ENCODE measurements at regions of chr5 and their contacts with region 1.

Region 1: GRCh38 chr5:40834849-40835787 is at the start of gene RPL37:
- DNase-seq: peak; percentile 96
- H3K4me3 Mint-ChIP-seq: peak within 1 kb of the TSS; percentile 100
- H3K27ac Mint-ChIP-seq: peak within 1 kb of the TSS; percentile 100
- H3K4me1 Mint-ChIP-seq: peaks cover 48% of the 10 kb centered on the region
- H3K27me3 Mint-ChIP-seq: no peaks in the 10 kb centered on the region
- total RNA-seq, gene RPL37: 2,148 to 2,239 TPM

Region 2: GRCh38 chr5:39202597-39203274 is 1632.4 kb before region 1 on chr5:
- CTCF ChIA-PET with region 1: no interaction called
- intact Hi-C with region 1: loop called (anchors 5 kb)
- DNase-seq: peak; percentile 55
- H3K4me3 Mint-ChIP-seq: peak overlapping the region; percentile 83
- H3K27ac Mint-ChIP-seq: peak overlapping the region; percentile 99
- H3K4me1 Mint-ChIP-seq: peaks cover 37% of the 10 kb centered on the region
- H3K27me3 Mint-ChIP-seq: no peaks in the 10 kb centered on the region

Region 3: GRCh38 chr5:40410231-40410861 is 424.8 kb before region 1 on chr5:
- CTCF ChIA-PET with region 1: no interaction called
- intact Hi-C with region 1: loop called (anchors 1 kb)
- DNase-seq: peak; percentile 88
- H3K4me3 Mint-ChIP-seq: peak overlapping the region; percentile 58
- H3K27ac Mint-ChIP-seq: peak overlapping the region; percentile 98
- H3K4me1 Mint-ChIP-seq: peaks cover 64% of the 10 kb centered on the region
- H3K27me3 Mint-ChIP-seq: no peaks in the 10 kb centered on the region

Region 4: GRCh38 chr5:40798012-40798855 is 36.9 kb before region 1 on chr5 and contains the start of gene PRKAA1:
- CTCF ChIA-PET with region 1: interaction called, 5 read pairs
- intact Hi-C with region 1: loop called (anchors 1 kb)
- DNase-seq: peak; percentile 85
- H3K4me3 Mint-ChIP-seq: peak within 1 kb of the TSS; percentile 88
- H3K27ac Mint-ChIP-seq: peak within 1 kb of the TSS; percentile 85
- H3K4me1 Mint-ChIP-seq: peaks cover 41% of the 10 kb centered on the region
- H3K27me3 Mint-ChIP-seq: peaks cover 2% of the 10 kb centered on the region
- total RNA-seq, gene PRKAA1: 52.6 to 58.6 TPM

Region 5: GRCh38 chr5:41869739-41870626 is 1034.9 kb after region 1 on chr5 and contains the start of gene OXCT1:
- CTCF ChIA-PET with region 1: no interaction called
- intact Hi-C with region 1: loop called (anchors 10 kb)
- DNase-seq: peak; percentile 93
- H3K4me3 Mint-ChIP-seq: peak within 1 kb of the TSS; percentile 92
- H3K27ac Mint-ChIP-seq: peak within 1 kb of the TSS; percentile 88
- H3K4me1 Mint-ChIP-seq: peaks cover 53% of the 10 kb centered on the region
- H3K27me3 Mint-ChIP-seq: no peaks in the 10 kb centered on the region
- total RNA-seq, gene OXCT1: 76.1 to 78.8 TPM

Measured in activated naive CD4-positive, alpha-beta T cell treated with anti-CD3 and anti-CD28 coated beads for 36 hours (primary cell).